Activated T-helper 1 cell treated with anti-CD3 and anti-CD28 coated beads, Interleukin-12 subunit alpha, Interleukin-12 subunit beta, Interleukin-2, Interleukin-4 antibody, amounts not matched to agents 30 ng/mL and 10 ng/mL and 1 ng/mL, durations not matched to agents 14 hours and 24 hours and 36 hours (primary cell): ENCODE measurements at regions of chr3 and their contacts with region 1.

Region 1: GRCh38 chr3:189324538-189325138 is 152.9 kb downstream of the TPRG1 start:
- DNase-seq: peak; percentile 85
- H3K4me3 Mint-ChIP-seq: peak overlapping the region; percentile 83
- H3K27ac Mint-ChIP-seq: peak overlapping the region; percentile 99
- H3K4me1 Mint-ChIP-seq: peaks cover 72% of the 10 kb centered on the region
- H3K27me3 Mint-ChIP-seq: peaks cover 3% of the 10 kb centered on the region

Region 2: DNA sequence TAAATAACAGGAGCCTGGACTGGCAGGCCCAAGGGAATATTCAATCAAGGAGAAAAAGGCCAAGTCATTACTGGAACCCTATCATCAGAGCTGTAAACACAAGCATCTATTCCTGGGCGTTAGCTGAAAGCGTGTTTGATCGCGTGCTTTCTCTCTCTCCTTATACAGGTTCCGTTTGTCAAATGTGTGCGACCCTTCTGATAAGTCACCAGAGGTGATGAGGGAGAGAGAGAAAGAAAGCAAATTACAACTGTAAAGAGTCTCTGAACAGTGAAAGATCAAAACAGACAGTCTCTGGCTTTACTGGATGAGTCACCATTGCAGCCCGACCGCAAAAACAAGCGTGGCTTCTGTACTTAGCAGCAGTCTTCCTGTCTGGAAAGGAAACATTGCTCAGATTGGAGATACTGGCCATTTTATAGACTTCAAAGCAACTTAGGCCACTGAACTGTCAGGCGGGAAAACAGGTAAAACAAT is 192.4 kb before region 1 on chr3:
- intact Hi-C with region 1: loop called (anchors 5 kb)
- DNase-seq: peak; percentile 75
- H3K4me3 Mint-ChIP-seq: peak overlapping the region; percentile 69
- H3K27ac Mint-ChIP-seq: peak overlapping the region; percentile 76
- H3K4me1 Mint-ChIP-seq: peaks cover 28% of the 10 kb centered on the region
- H3K27me3 Mint-ChIP-seq: no peaks in the 10 kb centered on the region

Region 3: DNA sequence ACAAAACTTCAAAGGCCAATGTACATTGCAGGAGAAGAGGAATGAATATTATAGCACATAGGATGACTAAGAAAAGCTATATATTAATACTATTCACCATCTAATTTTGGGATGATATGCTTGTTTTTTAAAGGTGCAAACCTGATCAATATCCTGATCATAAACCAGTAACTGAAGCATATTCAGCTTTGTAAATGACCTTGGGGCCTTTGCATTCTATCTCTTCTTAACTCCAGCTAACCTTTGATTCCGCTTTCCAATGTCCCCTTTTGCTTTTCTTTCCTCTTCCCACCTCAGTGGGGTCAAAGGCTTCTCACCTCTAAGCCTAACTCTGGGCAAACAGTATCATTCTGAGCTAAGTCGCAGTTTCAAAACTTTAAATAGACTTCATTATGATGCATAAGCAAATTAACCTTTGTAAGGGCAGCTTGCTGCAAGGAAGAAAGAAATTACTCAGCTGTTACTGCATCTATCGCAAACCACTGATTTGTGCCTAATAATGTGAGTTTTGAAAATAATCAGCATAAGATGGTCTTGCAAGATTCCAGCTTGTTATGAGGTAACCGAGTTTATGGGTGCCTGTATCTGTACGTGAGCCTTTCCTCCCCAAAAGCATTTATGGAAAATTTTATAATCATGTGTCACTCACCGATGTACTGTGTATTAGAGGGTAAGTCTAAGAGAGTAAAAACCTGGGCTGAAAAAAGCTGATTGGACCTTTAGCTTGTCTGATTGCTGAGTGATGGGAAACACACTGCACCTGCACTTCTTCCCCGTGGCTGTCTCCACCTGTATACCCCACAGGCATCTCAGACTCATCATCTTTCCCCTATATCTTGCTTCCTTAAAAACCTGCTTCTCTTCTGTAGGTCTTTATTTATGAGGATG is 36.0 kb before region 1 on chr3:
- intact Hi-C with region 1: loop called (anchors 2 kb)
- DNase-seq: no peak
- H3K4me3 Mint-ChIP-seq: no peak overlapping the region
- H3K27ac Mint-ChIP-seq: peak overlapping the region; percentile 59
- H3K4me1 Mint-ChIP-seq: peaks cover 40% of the 10 kb centered on the region
- H3K27me3 Mint-ChIP-seq: no peaks in the 10 kb centered on the region

Region 4: GRCh38 chr3:189355481-189356201 is 31.0 kb after region 1 on chr3:
- intact Hi-C with region 1: loop called (anchors 2 kb)
- DNase-seq: peak; percentile 30
- H3K4me3 Mint-ChIP-seq: peak overlapping the region; percentile 23
- H3K27ac Mint-ChIP-seq: peak overlapping the region; percentile 82
- H3K4me1 Mint-ChIP-seq: peaks cover 24% of the 10 kb centered on the region
- H3K27me3 Mint-ChIP-seq: no peaks in the 10 kb centered on the region

Region 5: GRCh38 chr3:189563866-189564563 is 239.4 kb after region 1 on chr3:
- intact Hi-C with region 1: loop called (anchors 1 kb)
- DNase-seq: peak; percentile 52
- H3K4me3 Mint-ChIP-seq: peak overlapping the region; percentile 2
- H3K27ac Mint-ChIP-seq: peak overlapping the region; percentile 58
- H3K4me1 Mint-ChIP-seq: peaks cover 56% of the 10 kb centered on the region
- H3K27me3 Mint-ChIP-seq: peaks cover 4% of the 10 kb centered on the region